ENCODE measurements at regions of chr2 and their contacts with region 1.

Region 1: DNA sequence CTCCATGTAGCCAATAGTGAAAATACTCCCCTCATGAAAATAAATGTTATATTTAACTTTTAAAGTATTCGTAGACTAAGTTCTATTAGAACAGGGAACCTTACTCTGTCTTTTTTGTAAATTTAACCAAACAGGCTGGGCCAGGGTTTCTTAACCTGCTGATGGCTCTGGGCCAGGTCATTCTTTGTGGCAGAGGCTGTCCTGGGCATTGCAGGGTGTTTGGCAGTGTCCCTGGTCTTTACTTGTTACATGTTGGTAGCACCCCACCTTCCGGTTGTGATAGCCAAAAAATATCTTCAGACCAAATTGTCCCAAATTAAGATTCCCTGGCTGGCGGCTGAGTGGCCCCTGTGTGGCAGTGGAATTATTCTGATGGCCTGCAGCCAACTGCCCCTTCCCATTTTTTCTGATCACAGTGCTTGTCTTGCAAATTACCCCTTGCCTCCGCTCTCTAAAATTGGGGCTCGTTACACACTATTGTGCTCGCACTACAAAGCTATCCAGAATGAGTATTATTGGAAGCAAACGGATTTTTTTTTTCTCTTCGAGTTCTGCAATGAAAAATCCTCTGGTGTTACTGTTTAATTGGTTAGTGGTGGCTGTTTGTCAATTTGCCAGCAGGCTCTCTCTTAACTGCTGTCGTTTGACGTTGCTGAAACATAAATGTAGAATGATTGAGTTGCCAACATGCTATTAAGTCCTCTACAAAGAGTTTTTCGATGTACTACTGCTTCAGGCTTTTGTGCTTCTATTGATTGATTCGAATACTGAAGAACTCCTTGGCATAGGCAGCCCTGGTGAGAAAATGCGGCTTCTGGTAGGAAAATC is 216.9 kb downstream of the SH3RF3 start:
- DNase-seq: peak in 1 of 2 donors; percentile 70
- H3K4me3 ChIP-seq: no peak overlapping the region
- H3K27ac ChIP-seq: no peak overlapping the region
- H3K4me1 ChIP-seq: no peaks in the 10 kb centered on the region
- H3K27me3 ChIP-seq: no peaks in the 10 kb centered on the region
- CTCF ChIP-seq: peak in 1 of 3 donors; percentile 18
- POLR2A ChIP-seq: no peak

Region 2: DNA sequence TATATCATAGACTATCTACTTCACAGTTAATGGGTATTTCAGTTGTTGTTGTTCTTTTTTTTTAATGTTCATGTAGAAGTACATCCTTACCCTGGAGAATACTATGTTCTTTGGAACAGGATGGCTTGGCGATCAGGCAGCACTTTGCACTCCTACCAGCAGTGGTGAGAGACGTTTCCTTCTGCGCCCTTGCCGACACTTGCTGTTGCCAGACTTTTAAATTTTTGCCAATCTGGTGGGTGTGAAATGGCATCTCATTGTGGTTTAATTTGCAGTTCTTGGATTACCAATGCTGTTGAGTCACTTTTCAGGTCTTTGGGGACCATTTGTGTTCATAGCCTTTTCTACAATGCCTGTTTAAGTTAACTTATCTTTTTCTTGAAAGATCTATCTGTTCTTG is 19.6 kb before region 1 on chr2:
- intact Hi-C with region 1: loop called (anchors 2 kb)
- DNase-seq: no peak
- H3K4me3 ChIP-seq: no peak overlapping the region
- H3K27ac ChIP-seq: no peak overlapping the region
- H3K4me1 ChIP-seq: peaks cover 2 to 12% of the 10 kb centered on the region in 2 donors
- H3K27me3 ChIP-seq: no peaks in the 10 kb centered on the region
- CTCF ChIP-seq: no peak
- POLR2A ChIP-seq: no peak

Region 3: DNA sequence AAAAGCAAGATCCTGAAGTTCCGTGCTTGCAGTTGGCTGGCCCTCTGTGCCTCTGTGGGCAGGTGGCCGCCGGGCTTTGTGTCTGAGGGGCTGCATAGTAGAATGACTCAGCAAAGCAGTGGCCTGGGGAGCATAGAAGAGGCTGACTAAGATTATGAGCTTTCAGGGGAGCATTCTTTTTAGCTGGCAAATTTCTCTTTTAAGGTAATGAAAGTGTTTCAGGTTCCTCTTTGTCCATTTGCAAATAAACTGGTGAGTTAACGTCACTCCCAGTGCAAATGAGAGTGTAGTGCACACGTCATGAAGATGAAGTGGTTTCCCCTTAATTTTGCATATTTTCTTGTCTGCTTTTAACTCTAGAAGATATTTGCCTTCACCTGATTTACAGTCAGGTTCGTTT is 1873.4 kb after region 1 on chr2:
- intact Hi-C with region 1: no loop called
- DNase-seq: no peak
- H3K4me3 ChIP-seq: no peak overlapping the region
- H3K27ac ChIP-seq: no peak overlapping the region
- H3K4me1 ChIP-seq: no peaks in the 10 kb centered on the region
- H3K27me3 ChIP-seq: no peaks in the 10 kb centered on the region
- CTCF ChIP-seq: no peak
- POLR2A ChIP-seq: no peak

Measured in breast epithelium (tissue), 4 donors.